K562 (cell line): ENCODE measurements at regions of chr15 and their contacts with region 1.

Region 1: GRCh38 chr15:58182460-58183163 is 44.4 kb downstream of the AQP9 start:
- DNase-seq: peak; percentile 63 to 84 (median 72)
- ATAC-seq: peak; percentile 90
- H3K4me3 ChIP-seq: no peak overlapping the region
- H3K27ac ChIP-seq: no peak overlapping the region
- H3K4me1 ChIP-seq: peaks cover 8 to 46% of the 10 kb centered on the region in 2 experiments
- H3K27me3 ChIP-seq: no peaks in the 10 kb centered on the region
- CTCF ChIP-seq: peak; percentile 91 to 96 (median 94)
- EP300 ChIP-seq: no peak; the same call in 1 of the 2 replicates
- POLR2A ChIP-seq: no peak
- RAD21 ChIP-seq: peak; percentile 98 to 100

Region 2: GRCh38 chr15:57732526-57733331 is 449.9 kb before region 1 on chr15:
- CTCF ChIA-PET with region 1: interaction called, 4 read pairs
- POLR2A ChIA-PET with region 1: no interaction called
- in situ Hi-C with region 1: no loop called
- intact Hi-C with region 1: loop called (anchors 5 kb)
- DNase-seq: peak; percentile 56 to 78 (median 65)
- ATAC-seq: peak; percentile 92
- H3K4me3 ChIP-seq: no peak overlapping the region
- H3K27ac ChIP-seq: no peak overlapping the region; the same call in 2 of the 3 replicates
- H3K4me1 ChIP-seq: peaks cover 0 to 14% of the 10 kb centered on the region in 2 experiments; a peak in 3 of 5 replicates
- H3K27me3 ChIP-seq: no peaks in the 10 kb centered on the region; a peak in 1 of 5 replicates
- CTCF ChIP-seq: peak; percentile 74 to 85 (median 80)
- EP300 ChIP-seq: peak; percentile 59; the same call in 1 of the 2 replicates
- POLR2A ChIP-seq: no peak
- RAD21 ChIP-seq: peak; percentile 44 to 61

Region 3: GRCh38 chr15:57866149-57866736 is 316.4 kb before region 1 on chr15:
- CTCF ChIA-PET with region 1: no interaction called
- POLR2A ChIA-PET with region 1: no interaction called
- in situ Hi-C with region 1: loop called (anchors 10 kb)
- intact Hi-C with region 1: loop called (anchors 1 kb)
- DNase-seq: peak; percentile 47 to 82 (median 52)
- ATAC-seq: peak; percentile 93
- H3K4me3 ChIP-seq: no peak overlapping the region
- H3K27ac ChIP-seq: no peak overlapping the region
- H3K4me1 ChIP-seq: no peaks in the 10 kb centered on the region
- H3K27me3 ChIP-seq: peaks cover 0 to 8% of the 10 kb centered on the region in 2 experiments; a peak in 2 of 5 replicates
- CTCF ChIP-seq: peak; percentile 80 to 87 (median 87)
- EP300 ChIP-seq: no peak
- POLR2A ChIP-seq: no peak
- RAD21 ChIP-seq: peak; percentile 60 to 75

Region 4: GRCh38 chr15:58077427-58077826 is 105.2 kb before region 1 on chr15:
- CTCF ChIA-PET with region 1: interaction called, 32 read pairs
- POLR2A ChIA-PET with region 1: interaction called, 5 read pairs
- in situ Hi-C with region 1: loop called (anchors 5 kb)
- intact Hi-C with region 1: loop called (anchors 1 kb)
- DNase-seq: peak in 2 of 4 experiments; percentile 43 to 64
- ATAC-seq: peak; percentile 91
- H3K4me3 ChIP-seq: no peak overlapping the region
- H3K27ac ChIP-seq: no peak overlapping the region
- H3K4me1 ChIP-seq: peaks cover 0 to 35% of the 10 kb centered on the region in 2 experiments; a peak in 4 of 5 replicates
- H3K27me3 ChIP-seq: no peaks in the 10 kb centered on the region
- CTCF ChIP-seq: peak; percentile 57 to 79 (median 65)
- EP300 ChIP-seq: peak; percentile 4; the same call in 1 of the 2 replicates
- POLR2A ChIP-seq: no peak
- RAD21 ChIP-seq: peak; percentile 84 to 95

Region 5: GRCh38 chr15:58221591-58222241 is 39.1 kb after region 1 on chr15:
- CTCF ChIA-PET with region 1: interaction called, 13 read pairs
- POLR2A ChIA-PET with region 1: no interaction called
- in situ Hi-C with region 1: no loop called
- intact Hi-C with region 1: loop called (anchors 1 kb)
- DNase-seq: peak; percentile 56 to 75 (median 66)
- ATAC-seq: peak; percentile 98
- H3K4me3 ChIP-seq: no peak overlapping the region
- H3K27ac ChIP-seq: no peak overlapping the region
- H3K4me1 ChIP-seq: peaks cover 3 to 10% of the 10 kb centered on the region in 2 experiments; a peak in 4 of 5 replicates
- H3K27me3 ChIP-seq: no peaks in the 10 kb centered on the region
- CTCF ChIP-seq: peak; percentile 81 to 89 (median 86)
- EP300 ChIP-seq: no peak
- POLR2A ChIP-seq: no peak
- RAD21 ChIP-seq: peak; percentile 84 to 91